Heart left ventricle (tissue), 16 donors: ENCODE measurements at regions of chr5 and their contacts with region 1.

Region 1: GRCh38 chr5:40688127-40688761 is 8.5 kb downstream of the PTGER4 start:
- DNase-seq: peak; percentile 76 to 88 (median 82)
- ATAC-seq: peak; percentile 84 to 92 (median 92)
- H3K4me3 ChIP-seq: peak overlapping the region in 8 of 12 donors; percentile 58 to 96 (median 86)
- H3K27ac ChIP-seq: peak overlapping the region in 10 of 12 donors; percentile 1 to 97 (median 54)
- H3K4me1 ChIP-seq: peaks cover 0 to 70% (median 22%) of the 10 kb centered on the region in 12 donors
- H3K27me3 ChIP-seq: no peaks in the 10 kb centered on the region
- CTCF ChIP-seq: peak; percentile 78 to 94 (median 86)
- POLR2A ChIP-seq: no peak

Region 2: DNA sequence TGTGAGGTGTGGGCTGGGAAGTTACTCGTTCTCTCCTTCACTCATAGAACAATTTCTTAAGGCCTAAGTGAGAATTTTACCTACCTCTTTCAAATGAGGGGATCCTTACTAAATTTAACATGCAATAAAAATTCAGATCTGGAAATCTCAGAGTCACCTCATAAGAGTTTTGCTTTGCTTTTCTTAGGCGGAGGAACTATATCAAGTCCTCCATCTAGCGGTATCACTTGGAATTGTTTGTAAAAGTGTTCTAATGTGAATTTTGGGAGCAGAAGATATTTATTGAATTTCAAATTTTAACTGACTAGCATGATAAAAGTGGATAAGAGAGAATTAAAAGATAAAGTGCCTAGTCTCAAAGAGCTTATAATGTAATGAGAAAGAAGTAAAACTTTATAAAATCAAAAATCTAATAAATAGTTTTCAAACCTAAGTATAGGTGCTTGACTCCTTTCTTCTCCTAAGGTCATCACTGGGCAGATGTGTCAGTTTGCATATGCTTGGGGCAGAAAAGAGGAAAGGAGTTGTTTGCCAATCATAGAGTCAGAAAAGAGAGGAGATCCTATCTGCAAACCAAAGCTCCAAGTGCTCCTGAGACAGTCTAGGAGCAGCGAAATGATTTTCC is 1117.7 kb before region 1 on chr5:
- intact Hi-C with region 1: loop called in 5 of 10 experiments (anchors 5 to 10 kb)
- DNase-seq: no peak
- ATAC-seq: no peak
- H3K4me3 ChIP-seq: no peak overlapping the region
- H3K27ac ChIP-seq: no peak overlapping the region
- H3K4me1 ChIP-seq: peaks cover 0 to 8% (median 0%) of the 10 kb centered on the region in 12 donors
- H3K27me3 ChIP-seq: peaks cover 0 to 8% (median 0%) of the 10 kb centered on the region in 9 donors
- CTCF ChIP-seq: peak; percentile 46 to 80 (median 67)
- POLR2A ChIP-seq: no peak

Region 3: GRCh38 chr5:39948867-39949468 is 739.3 kb before region 1 on chr5:
- intact Hi-C with region 1: loop called (anchors 1 to 5 kb)
- DNase-seq: peak in 4 of 5 donors; percentile 31 to 54 (median 46)
- ATAC-seq: peak in 3 of 4 donors; percentile 45 to 78 (median 73)
- H3K4me3 ChIP-seq: no peak overlapping the region
- H3K27ac ChIP-seq: no peak overlapping the region
- H3K4me1 ChIP-seq: peaks cover 0 to 10% (median 0%) of the 10 kb centered on the region in 12 donors
- H3K27me3 ChIP-seq: no peaks in the 10 kb centered on the region
- CTCF ChIP-seq: peak; percentile 43 to 83 (median 71)
- POLR2A ChIP-seq: no peak

Region 4: DNA sequence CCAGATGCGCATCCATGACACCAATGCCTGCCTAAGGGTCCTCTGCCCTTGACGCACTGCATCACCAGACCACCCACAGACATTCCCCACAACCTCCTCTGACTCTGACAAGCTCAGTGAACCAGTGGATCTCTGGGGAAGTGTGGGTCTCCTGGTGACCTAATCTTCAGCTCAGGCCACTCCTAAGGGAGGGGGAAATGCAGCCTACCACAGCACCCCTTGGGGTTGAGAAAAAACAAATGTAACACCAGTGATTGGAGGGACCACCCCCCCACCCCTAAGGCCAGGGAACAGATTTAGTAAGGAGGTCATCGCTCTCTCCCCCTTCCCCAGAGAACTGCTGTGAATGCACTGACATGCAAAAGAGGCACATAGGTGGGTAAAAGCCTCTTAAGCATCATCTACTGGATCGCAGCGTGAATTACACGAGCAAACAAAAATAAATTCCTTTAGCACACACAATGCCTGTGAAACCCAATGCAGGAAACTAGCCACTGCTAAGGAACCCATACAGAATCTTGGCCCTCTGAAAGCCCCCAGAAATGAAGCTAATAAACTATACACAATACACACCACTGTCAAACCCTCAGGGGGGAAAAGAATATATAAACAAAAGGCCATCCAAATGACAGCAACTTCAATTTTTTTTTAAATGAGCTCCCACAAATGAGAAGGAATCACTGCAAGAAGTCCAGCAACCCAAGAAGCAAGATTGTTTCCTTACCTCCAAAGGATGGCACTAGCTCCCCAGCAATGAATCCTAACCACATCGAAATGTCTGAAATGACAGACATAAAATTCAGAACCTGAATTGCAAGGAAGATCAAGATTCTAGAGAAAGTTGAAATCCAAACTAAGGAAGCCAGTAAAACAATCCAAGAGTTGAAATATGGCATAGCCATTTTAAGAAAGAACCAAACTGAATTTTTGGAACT is 522.2 kb before region 1 on chr5:
- intact Hi-C with region 1: loop called in 7 of 10 experiments (anchors 2 to 10 kb)
- DNase-seq: no peak
- ATAC-seq: no peak
- H3K4me3 ChIP-seq: no peak overlapping the region
- H3K27ac ChIP-seq: no peak overlapping the region
- H3K4me1 ChIP-seq: no peaks in the 10 kb centered on the region
- H3K27me3 ChIP-seq: no peaks in the 10 kb centered on the region
- CTCF ChIP-seq: peak in 8 of 12 donors; percentile 6 to 38 (median 30)
- POLR2A ChIP-seq: no peak

Region 5: DNA sequence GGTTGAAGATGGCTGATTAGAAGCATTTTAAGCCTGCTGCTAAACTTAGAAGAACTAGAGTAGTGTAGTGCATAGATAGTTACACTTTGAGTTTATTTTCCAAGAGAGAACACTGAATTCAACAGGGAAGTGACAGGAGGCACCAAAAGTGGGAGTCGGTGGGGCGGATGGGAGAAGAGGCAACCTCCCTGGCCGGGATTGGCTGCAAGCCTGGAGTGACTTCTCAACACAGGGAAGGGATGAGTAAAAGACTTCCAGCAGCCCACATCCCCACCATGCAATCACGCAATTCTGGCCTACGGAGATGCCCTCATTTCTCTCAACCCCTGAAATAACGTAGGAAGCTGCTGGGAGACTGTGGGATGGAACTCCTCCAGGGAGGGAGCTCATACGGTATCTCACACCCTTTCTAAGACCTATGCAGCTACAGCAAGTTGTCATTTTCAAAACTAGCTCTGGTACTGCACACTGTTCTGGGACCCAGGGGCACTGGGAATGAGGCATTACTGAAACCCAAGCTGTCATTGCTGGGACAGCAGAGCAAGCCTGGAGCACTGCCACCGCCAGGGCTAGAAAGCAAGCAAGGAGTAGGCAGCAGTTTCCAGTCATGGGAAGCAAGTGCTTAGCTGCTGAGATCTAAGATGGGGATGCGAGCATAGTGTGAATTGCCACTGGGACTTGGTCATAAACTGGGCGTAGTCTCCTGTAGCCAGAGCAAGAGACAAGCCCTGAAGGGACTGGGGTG is 340.1 kb before region 1 on chr5:
- intact Hi-C with region 1: no loop called
- DNase-seq: no peak
- ATAC-seq: no peak
- H3K4me3 ChIP-seq: no peak overlapping the region
- H3K27ac ChIP-seq: no peak overlapping the region
- H3K4me1 ChIP-seq: no peaks in the 10 kb centered on the region
- H3K27me3 ChIP-seq: no peaks in the 10 kb centered on the region
- CTCF ChIP-seq: no peak
- POLR2A ChIP-seq: no peak

Region 6: DNA sequence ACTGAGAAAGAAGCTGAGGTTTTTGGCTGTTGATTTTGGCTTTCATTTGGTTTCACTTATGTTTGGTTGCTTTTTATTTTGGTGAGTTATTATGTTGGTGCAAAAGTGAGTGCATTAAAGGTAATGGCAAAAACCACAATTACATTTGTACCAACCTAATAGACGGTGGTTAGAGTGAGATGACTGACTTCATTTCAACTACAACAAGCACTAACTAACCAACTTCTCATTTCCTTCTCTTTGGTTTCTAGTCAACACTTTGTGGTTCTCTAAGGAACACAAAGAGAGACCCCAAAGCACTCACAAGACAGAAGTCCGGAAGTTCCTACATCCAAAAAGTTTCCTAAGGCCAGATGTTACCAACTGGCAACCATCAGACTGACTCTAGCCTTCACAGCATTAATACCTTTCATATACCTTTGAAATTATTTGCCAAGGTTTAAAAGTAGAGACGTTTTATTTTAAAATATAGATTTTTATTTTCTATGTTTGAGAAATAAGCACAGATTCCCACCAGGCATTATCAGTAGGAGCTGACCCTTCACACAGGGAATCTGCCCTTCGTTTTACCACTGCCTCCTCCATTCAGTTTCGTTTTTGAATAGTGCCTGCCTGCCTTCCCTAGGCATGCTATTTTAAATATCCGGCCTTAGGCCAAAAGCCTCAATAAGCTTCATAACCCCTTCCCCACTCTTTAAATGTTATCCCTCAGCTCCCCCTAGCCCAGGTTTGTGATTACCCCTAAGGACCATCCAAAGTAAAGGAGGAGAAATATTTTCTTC is 309.7 kb before region 1 on chr5:
- intact Hi-C with region 1: no loop called
- DNase-seq: no peak
- ATAC-seq: no peak
- H3K4me3 ChIP-seq: no peak overlapping the region
- H3K27ac ChIP-seq: peak overlapping the region in 1 of 12 donors; percentile 56
- H3K4me1 ChIP-seq: peaks cover 0 to 23% (median 0%) of the 10 kb centered on the region in 12 donors
- H3K27me3 ChIP-seq: no peaks in the 10 kb centered on the region
- CTCF ChIP-seq: no peak
- POLR2A ChIP-seq: no peak

Region 7: DNA sequence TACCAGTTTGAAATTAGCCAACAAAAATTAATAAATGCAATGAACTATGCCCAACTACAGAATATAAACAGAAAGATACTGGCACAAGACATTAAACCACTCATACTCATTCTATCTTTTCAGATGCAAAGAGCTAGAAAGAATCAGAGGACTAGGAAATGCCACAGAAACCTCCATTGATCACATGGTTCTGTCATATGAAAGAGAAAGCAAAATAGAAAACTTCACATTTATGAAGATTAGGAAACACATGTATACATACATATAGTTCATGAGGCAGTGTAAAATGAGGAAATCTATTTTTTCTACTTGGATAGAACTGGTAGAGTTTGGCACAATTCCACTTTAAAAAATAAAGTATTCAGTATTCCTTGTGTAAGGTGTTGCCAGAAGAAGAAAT is 283.6 kb before region 1 on chr5:
- intact Hi-C with region 1: loop called in 4 of 10 experiments (anchors 5 to 10 kb)
- DNase-seq: no peak
- ATAC-seq: no peak
- H3K4me3 ChIP-seq: no peak overlapping the region
- H3K27ac ChIP-seq: peak overlapping the region in 1 of 12 donors; percentile 90
- H3K4me1 ChIP-seq: peaks cover 0 to 71% (median 23%) of the 10 kb centered on the region in 12 donors
- H3K27me3 ChIP-seq: no peaks in the 10 kb centered on the region
- CTCF ChIP-seq: no peak
- POLR2A ChIP-seq: no peak

Region 8: DNA sequence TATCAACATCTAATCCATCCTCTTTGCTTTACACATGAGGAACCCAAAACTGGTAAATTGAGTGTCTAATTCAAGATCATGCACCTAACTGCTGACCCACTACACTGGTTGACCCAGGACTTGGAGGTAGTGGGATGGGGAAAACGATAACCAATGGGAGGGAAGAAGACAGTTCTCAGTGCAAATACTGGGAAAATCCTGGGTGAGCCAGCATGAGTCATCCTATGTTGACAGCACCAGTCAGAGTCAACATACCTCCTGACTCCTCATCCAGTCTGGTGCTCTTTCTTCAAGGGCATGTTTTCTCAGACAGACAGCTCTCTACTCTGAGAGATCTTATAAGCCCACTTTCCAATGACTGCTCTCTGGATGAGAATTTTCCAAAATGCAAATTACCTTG is 241.3 kb before region 1 on chr5:
- intact Hi-C with region 1: loop called in 1 of 10 experiments (anchors 10 kb)
- DNase-seq: no peak
- ATAC-seq: no peak
- H3K4me3 ChIP-seq: no peak overlapping the region
- H3K27ac ChIP-seq: no peak overlapping the region
- H3K4me1 ChIP-seq: peaks cover 0 to 6% (median 0%) of the 10 kb centered on the region in 12 donors
- H3K27me3 ChIP-seq: no peaks in the 10 kb centered on the region
- CTCF ChIP-seq: no peak
- POLR2A ChIP-seq: no peak

Region 9: DNA sequence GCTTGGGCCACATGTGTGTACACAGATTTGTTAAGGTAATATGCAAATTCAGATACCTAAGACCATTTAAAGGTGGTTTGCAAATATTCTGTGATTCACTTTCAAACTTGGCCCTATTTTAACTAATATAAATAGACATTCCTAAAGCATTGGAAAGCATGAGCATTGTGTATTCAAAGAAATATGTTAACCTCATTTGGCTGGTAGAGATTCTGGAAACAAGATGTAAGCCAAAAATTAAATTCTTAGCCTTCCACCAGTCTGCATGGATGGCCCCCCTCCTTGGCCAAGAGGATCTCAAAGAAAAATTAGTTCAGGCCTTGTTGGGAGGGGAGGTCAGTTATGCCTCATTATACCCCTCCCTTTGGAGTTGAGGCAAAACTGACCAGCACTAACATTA is 563.8 kb after region 1 on chr5:
- intact Hi-C with region 1: no loop called
- DNase-seq: no peak
- ATAC-seq: no peak
- H3K4me3 ChIP-seq: no peak overlapping the region
- H3K27ac ChIP-seq: no peak overlapping the region
- H3K4me1 ChIP-seq: no peaks in the 10 kb centered on the region
- H3K27me3 ChIP-seq: no peaks in the 10 kb centered on the region
- CTCF ChIP-seq: no peak
- POLR2A ChIP-seq: no peak